Head of caudate nucleus (tissue), 42 donors: ENCODE measurements at regions of chr1 and their contacts with region 1.

Region 1: GRCh38 chr1:48817505-48818114 is 40.9 kb upstream of the BEND5 start:
- DNase-seq: peak; percentile 12 to 83 (median 58)

Region 2: DNA sequence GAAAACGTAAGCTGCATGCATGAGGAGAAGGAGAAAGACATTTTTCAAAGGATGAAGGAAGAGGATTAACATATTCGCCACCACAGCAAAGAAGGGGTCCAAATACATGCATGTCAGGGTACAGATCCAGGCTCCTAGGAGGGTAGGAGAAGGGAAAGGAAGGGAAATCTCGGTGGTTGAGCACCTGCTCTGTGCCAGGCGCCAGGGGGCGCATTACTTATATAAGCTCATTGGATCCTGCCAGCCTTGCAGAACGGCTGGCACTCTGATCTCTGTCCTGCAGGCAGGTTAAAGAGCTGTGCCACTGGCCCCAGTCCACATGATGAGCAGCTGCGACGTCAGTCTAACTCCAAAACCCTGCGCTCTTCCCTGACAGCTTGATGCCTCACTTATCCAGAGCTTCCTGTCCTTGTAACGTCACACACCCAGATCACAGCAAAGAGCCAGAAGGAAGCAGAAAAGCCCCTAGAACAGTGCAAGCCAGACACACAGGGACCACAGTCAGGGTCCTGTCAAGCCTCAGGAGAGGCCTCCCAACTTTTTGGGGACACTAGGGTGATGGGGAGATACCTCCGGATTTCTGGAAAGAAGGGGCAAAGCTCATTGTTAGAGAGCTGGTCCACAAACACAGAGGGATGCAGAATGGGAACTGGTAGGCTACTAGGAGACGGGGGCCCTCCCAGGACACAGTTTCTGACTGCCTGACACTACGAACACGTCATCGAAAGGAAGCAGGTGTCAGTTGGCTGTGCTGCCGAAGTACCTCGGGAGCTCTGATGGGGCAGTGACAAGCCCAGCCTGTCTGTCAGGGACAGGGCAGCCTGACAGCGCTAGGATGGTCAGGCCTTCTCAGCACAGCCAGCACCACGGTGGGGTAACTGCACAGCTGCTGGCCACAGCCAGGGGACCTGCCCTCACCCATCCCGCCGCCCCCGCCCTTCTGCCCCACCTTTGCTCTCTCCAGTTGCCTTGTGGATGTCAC is 140.0 kb before region 1 on chr1:
- intact Hi-C with region 1: loop called (anchors 10 kb)
- DNase-seq: peak; percentile 61 to 89 (median 78)

Region 3: GRCh38 chr1:48757363-48757762 is 60.2 kb before region 1 on chr1:
- intact Hi-C with region 1: no loop called
- DNase-seq: no peak